Ascending aorta (tissue), 2 donors: ENCODE measurements at regions of chr17 and their contacts with region 1.

Region 1: GRCh38 chr17:17206124-17206912 is at the start of gene PLD6:
- DNase-seq: peak; percentile 44 to 85
- H3K4me3 ChIP-seq: peak within 1 kb of the TSS; percentile 62 to 81
- H3K27ac ChIP-seq: peak within 1 kb of the TSS; percentile 89 to 90
- H3K4me1 ChIP-seq: peaks cover 13 to 36% of the 10 kb centered on the region in 2 donors
- H3K27me3 ChIP-seq: no peaks in the 10 kb centered on the region
- CTCF ChIP-seq: no peak
- total RNA-seq, gene PLD6: 0.32 TPM

Region 2: GRCh38 chr17:17001874-17002520 is 204.3 kb before region 1 on chr17:
- intact Hi-C with region 1: loop called (anchors 10 kb)
- DNase-seq: peak in 1 of 2 donors; percentile 81
- H3K4me3 ChIP-seq: peak overlapping the region in 1 of 2 donors; percentile 41
- H3K27ac ChIP-seq: no peak overlapping the region
- H3K4me1 ChIP-seq: peaks cover 10 to 18% of the 10 kb centered on the region in 2 donors
- H3K27me3 ChIP-seq: no peaks in the 10 kb centered on the region
- CTCF ChIP-seq: peak; percentile 90 to 99 (median 94)

Region 3: DNA sequence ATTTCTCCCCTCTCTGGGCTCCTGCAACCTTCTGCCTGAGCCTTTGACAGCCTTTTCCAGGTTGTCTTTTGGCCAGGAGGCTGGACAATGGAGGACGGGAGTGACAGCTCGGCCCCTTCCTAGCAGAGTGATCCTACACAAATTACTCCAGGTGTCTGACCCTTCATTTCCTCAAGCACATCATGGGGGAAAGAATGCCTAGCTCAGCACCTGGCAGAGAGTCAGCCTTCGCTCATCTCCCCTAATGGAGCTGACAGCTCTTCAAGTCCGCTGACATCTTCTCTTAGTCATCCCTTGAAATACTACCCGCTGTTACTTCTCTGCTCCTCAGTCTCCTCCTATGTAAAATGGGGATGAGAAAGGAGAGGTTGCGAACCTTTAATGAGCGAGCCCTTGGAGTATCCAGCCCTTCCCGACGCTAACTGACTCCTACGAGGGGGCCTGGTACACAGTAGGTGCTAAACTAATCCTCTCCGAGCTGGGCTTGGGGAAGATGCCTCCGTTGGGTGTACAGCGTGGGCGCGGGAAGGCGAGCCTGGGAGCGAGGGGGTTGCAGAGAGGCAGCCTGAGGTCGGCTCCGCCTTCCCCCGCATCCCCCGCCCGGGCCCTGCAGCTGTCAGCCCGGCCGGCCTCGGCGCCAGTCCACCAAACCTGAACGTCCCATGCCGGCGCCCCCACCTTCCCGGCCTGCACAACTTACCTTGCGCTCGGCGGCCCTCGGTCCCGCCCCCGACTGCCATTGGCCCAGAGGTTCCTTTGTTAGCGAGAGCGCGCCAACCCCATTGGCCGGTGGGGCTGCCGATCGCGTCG is 164.5 kb before region 1 on chr17:
- intact Hi-C with region 1: loop called (anchors 2 kb)
- DNase-seq: peak; percentile 95 to 99
- H3K4me3 ChIP-seq: peak overlapping the region; percentile 49 to 75
- H3K27ac ChIP-seq: peak overlapping the region; percentile 57 to 58
- H3K4me1 ChIP-seq: peaks cover 3 to 29% of the 10 kb centered on the region in 2 donors
- H3K27me3 ChIP-seq: no peaks in the 10 kb centered on the region
- CTCF ChIP-seq: no peak

Region 4: DNA sequence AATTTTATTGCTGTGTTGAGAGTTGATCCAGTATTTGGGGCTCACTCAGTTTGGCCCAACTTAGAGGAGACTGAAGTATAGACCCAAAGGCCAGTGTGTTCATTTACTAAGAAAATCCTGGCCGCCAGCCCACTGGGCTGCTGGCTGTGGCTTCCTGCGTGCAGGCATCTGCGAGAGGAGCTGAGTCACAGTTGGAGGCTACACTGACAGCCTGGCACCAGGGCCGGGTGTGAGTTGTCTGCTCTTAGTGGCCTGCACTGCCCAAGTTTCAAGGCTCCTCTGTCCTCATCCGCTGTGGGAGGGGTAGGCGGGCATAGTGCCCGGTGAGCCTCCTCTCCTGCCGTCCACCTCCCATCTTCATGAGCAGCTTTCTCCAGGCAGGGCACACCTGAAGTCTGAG is 54.4 kb before region 1 on chr17:
- intact Hi-C with region 1: loop called (anchors 2 kb)
- DNase-seq: peak; percentile 81 to 97
- H3K4me3 ChIP-seq: no peak overlapping the region
- H3K27ac ChIP-seq: peak overlapping the region; percentile 79 to 91
- H3K4me1 ChIP-seq: peaks cover 15% of the 10 kb centered on the region in 2 donors
- H3K27me3 ChIP-seq: no peaks in the 10 kb centered on the region
- CTCF ChIP-seq: no peak

Region 5: DNA sequence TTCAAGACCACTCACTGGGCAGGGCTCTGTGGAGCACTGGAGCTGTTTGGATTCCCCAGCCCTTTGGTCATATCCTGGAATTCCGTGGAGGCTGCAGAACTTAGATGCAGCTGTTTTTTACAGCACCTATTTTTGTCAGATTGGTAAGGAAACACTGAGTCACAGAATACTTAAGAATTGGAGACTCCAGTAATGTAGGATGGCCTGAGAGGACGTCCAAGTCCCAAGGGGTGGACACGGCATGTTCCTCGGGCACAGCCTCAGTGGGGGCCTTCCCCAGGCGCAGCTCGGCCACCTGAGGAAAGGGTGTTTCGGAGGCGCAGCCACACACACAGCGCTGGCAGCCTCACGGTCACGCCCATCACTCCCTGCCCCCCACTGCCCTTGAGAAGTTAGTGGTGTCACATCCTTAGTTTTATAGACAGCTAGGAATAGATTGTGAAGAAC is 14.9 kb before region 1 on chr17:
- intact Hi-C with region 1: loop called (anchors 1 kb)
- DNase-seq: peak in 1 of 2 donors; percentile 84
- H3K4me3 ChIP-seq: no peak overlapping the region
- H3K27ac ChIP-seq: peak overlapping the region; percentile 61 to 70
- H3K4me1 ChIP-seq: peaks cover 7 to 23% of the 10 kb centered on the region in 2 donors
- H3K27me3 ChIP-seq: no peaks in the 10 kb centered on the region
- CTCF ChIP-seq: no peak

Region 6: GRCh38 chr17:17237026-17237799 is 30.9 kb after region 1 on chr17 and contains the start of gene FLCN:
- intact Hi-C with region 1: loop called (anchors 1 kb)
- DNase-seq: peak; percentile 50 to 95
- H3K4me3 ChIP-seq: peak within 1 kb of the TSS; percentile 81 to 96
- H3K27ac ChIP-seq: peak within 1 kb of the TSS; percentile 86 to 95
- H3K4me1 ChIP-seq: peaks cover 3 to 8% of the 10 kb centered on the region in 2 donors
- H3K27me3 ChIP-seq: no peaks in the 10 kb centered on the region
- CTCF ChIP-seq: no peak
- total RNA-seq, gene FLCN: 48.6 TPM

Region 7: DNA sequence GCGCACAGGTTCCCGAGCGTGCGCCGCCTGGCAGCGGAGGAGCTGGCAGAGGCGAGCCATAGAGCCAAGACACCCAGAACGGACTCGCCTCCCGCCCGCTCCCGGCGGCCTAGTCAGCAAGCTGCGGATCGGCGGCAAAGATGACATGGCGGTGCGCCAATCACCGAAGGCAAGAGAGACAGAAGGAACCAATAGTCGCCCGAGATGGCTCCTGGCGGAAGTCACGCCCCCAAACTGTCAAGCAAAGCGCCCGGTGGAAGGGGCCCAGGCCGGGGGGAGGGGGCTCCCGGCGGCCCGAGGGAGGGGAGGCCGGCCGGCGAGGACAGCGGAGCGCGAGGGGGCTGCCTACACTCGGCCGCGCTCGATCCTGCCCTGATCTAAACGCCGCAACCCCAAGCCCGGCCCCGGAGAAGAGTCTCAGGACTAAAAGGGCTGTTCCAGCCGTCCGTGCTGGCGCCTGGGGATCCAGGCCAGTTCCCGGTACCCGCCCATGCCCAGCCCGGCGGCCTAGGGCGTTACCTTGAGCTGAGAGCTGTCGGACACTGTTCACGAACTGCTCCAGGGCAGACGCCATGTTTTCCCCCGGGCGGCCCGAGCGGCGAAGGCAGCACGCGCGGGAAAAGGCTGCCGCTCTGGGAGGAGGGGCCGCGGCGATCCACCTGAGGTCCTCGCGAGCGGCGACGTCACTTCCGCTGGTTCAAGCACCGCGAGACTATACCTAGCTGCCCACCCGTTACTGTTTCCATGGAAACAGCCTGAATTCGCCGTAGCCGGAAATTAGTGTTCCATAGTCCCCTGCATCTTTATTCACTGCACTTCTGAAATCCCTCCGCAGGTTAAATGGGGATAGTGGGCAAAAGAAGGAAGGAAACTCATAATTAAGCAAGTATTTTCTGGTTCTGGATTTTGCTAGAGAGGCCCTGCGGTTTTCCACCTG is 74.6 kb after region 1 on chr17 and contains the start of gene COPS3:
- intact Hi-C with region 1: loop called (anchors 2 kb)
- DNase-seq: peak; percentile 88 to 99
- H3K4me3 ChIP-seq: peak within 1 kb of the TSS; percentile 88 to 92
- H3K27ac ChIP-seq: peak within 1 kb of the TSS; percentile 97 to 98
- H3K4me1 ChIP-seq: peaks cover 5 to 14% of the 10 kb centered on the region in 2 donors
- H3K27me3 ChIP-seq: no peaks in the 10 kb centered on the region
- CTCF ChIP-seq: no peak
- total RNA-seq, gene COPS3: 36.6 TPM

Region 8: GRCh38 chr17:17890773-17891759 is 684.7 kb after region 1 on chr17:
- intact Hi-C with region 1: no loop called
- DNase-seq: no peak
- H3K4me3 ChIP-seq: no peak overlapping the region
- H3K27ac ChIP-seq: no peak overlapping the region
- H3K4me1 ChIP-seq: no peaks in the 10 kb centered on the region
- H3K27me3 ChIP-seq: no peaks in the 10 kb centered on the region
- CTCF ChIP-seq: peak; percentile 21 to 44 (median 27)